ENCODE measurements at regions of chr1 and their contacts with region 1.

Region 1: DNA sequence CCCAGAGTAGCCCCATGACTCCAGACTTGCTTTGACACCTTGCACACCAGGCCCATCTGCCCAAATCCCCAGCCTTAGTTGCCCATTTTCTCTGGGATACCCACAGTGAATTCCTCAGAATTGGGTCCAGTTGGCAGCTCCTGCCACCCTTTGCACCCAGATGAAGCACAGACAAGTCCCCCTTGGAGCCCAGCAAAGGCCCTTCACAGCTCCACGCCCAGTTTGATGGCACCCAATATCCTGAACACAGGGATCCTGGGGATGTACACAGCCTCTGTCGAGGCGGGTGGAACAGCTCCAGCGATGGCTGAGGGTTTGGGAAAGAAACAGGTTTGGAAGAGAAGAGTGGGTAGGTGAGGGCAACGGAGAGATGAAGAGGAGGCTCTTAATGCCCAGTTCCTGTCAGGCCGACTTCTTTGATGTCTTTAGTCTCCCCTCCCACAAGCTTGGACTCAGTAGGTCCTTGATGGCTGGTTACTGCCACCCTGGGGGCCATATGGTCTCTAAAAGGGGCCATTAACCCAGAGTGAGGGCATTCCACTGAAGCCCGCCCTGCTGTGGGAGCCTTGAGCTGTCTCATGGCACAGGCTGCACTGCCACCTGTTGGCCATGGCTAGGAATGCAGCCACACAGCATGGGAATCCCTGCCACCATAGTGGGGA is 21.7 kb downstream of the TMEM53 start:
- DNase-seq: peak; percentile 83
- H3K4me3 Mint-ChIP-seq: no peak overlapping the region
- H3K27ac Mint-ChIP-seq: no peak overlapping the region
- H3K4me1 Mint-ChIP-seq: no peaks in the 10 kb centered on the region
- H3K27me3 Mint-ChIP-seq: no peaks in the 10 kb centered on the region

Region 2: GRCh38 chr1:44377925-44378784 is 274.4 kb before region 1 on chr1:
- CTCF ChIA-PET with region 1: interaction called, 25 read pairs
- intact Hi-C with region 1: loop called (anchors 1 kb)
- DNase-seq: peak; percentile 73
- H3K4me3 Mint-ChIP-seq: no peak overlapping the region
- H3K27ac Mint-ChIP-seq: no peak overlapping the region
- H3K4me1 Mint-ChIP-seq: no peaks in the 10 kb centered on the region
- H3K27me3 Mint-ChIP-seq: no peaks in the 10 kb centered on the region

Region 3: GRCh38 chr1:44390277-44390676 is 262.3 kb before region 1 on chr1:
- CTCF ChIA-PET with region 1: no interaction called
- intact Hi-C with region 1: no loop called
- DNase-seq: no peak
- H3K4me3 Mint-ChIP-seq: no peak overlapping the region
- H3K27ac Mint-ChIP-seq: no peak overlapping the region
- H3K4me1 Mint-ChIP-seq: no peaks in the 10 kb centered on the region
- H3K27me3 Mint-ChIP-seq: peaks cover 7% of the 10 kb centered on the region

Region 4: DNA sequence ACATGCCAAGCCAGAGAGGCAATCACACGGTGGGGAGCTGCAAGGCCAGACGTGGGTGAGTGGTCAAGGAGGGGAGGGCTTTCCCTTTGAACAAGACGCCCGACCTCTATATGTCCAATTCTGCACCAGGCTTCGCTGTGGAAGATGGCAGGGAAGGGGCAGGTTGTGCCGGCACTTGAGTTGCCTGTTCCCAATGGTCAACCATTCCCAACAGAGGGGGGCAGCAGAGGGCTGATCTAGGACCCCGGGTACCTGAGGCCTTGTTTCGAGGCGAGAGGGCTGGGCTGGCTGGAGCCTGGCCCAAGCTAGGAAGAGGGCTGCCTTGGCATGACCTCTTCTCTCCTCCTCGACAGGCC is 43.2 kb before region 1 on chr1:
- CTCF ChIA-PET with region 1: interaction called, 31 read pairs
- intact Hi-C with region 1: loop called (anchors 1 kb)
- DNase-seq: peak; percentile 40
- H3K4me3 Mint-ChIP-seq: no peak overlapping the region
- H3K27ac Mint-ChIP-seq: no peak overlapping the region
- H3K4me1 Mint-ChIP-seq: no peaks in the 10 kb centered on the region
- H3K27me3 Mint-ChIP-seq: no peaks in the 10 kb centered on the region

Region 5: GRCh38 chr1:44631647-44632539 is 20.7 kb before region 1 on chr1:
- CTCF ChIA-PET with region 1: interaction called, 135 read pairs
- intact Hi-C with region 1: no loop called
- DNase-seq: peak; percentile 95
- H3K4me3 Mint-ChIP-seq: peak overlapping the region; percentile 91
- H3K27ac Mint-ChIP-seq: peak overlapping the region; percentile 95
- H3K4me1 Mint-ChIP-seq: peaks cover 39% of the 10 kb centered on the region
- H3K27me3 Mint-ChIP-seq: no peaks in the 10 kb centered on the region

Region 6: DNA sequence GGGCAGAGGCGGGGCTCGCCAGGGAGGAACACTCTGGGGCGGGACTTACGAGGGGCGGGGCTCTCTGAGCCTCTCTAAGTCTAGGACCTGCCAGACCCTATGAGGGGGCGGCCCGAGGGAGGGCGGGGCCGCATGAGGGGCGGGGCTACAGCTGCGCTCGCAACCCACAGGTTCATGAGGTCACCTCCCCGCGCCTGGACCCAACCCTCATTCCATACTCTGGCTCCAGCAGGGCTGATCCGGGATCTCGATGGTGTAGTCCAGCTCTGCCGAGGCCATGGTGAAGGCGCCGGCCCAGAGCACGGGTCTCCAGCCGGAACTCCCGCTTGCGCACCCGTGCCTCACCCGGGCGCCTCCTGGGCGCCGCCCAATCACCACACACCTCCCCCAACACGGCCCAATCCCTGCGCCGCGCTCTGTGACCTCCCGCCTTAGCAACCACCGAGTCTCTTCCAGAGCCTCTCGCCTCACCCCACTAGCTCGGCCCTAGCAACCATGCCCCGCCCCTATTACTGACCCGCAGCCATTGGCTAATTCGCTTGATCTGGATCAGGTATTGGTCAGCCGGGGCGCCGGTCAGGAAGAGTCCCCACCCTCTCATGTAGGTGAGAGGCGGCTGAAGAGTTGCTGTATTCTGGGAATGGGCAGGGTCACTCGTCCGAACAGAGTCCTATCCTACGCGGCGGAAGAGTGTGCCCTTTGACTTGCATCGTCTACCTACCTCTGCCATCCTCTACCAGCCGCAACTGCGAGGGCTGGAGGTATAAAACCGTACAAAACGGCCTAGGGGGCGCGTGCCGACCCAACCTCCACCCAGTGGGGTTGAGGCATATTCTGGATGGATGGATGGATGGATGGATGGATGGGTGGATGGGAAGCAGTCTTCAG is 21.8 kb after region 1 on chr1 and contains the starts of genes ARMH1 and TMEM53:
- CTCF ChIA-PET with region 1: interaction called, 35 read pairs
- intact Hi-C with region 1: no loop called
- DNase-seq: peak; percentile 99
- H3K4me3 Mint-ChIP-seq: peak within 1 kb of the TSS; percentile 82
- H3K27ac Mint-ChIP-seq: peak within 1 kb of the TSS; percentile 78
- H3K4me1 Mint-ChIP-seq: peaks cover 18% of the 10 kb centered on the region
- H3K27me3 Mint-ChIP-seq: no peaks in the 10 kb centered on the region
- total RNA-seq, gene ARMH1: 143 to 155 TPM
- total RNA-seq, gene TMEM53: 4.5 to 4.9 TPM

Region 7: DNA sequence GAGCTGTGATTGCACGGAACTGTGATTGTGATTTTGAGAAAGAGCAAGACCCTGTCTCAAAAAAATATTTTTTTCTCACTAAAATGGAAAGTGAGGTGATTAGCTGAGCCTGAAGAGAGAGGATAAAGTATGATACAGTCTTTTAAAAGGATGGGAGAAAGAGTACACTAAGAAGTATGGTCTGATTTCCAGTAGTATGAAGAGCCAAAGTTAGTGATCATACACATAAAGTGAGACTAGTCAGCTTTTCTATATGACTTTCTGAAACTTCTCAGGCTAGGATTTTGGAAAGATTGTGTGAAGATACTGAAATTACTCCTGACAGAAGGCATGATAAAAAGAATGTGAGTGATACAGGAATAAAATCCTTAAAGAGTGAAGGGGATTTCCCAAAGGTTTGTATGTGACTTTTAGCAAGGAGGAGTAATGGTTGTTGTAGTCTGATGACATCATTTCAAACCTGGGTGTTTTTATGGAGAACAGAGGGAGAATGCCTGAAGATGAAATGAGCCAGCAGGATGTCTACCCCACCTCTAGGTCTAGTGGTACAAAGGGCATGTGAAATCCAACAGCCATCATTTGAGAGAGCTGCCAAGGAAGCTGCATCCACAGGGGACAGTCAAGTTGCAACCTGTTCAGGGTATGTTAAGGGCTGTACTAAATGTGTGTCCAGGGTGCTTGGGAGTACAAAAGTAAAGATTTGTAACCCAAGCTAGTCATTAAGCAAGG is 1322.1 kb after region 1 on chr1:
- CTCF ChIA-PET with region 1: no interaction called
- intact Hi-C with region 1: no loop called
- DNase-seq: peak; percentile 23
- H3K4me3 Mint-ChIP-seq: no peak overlapping the region
- H3K27ac Mint-ChIP-seq: no peak overlapping the region
- H3K4me1 Mint-ChIP-seq: no peaks in the 10 kb centered on the region
- H3K27me3 Mint-ChIP-seq: no peaks in the 10 kb centered on the region